Calu3 (cell line): ENCODE measurements at regions of chr11 and their contacts with region 1.

Region 1: DNA sequence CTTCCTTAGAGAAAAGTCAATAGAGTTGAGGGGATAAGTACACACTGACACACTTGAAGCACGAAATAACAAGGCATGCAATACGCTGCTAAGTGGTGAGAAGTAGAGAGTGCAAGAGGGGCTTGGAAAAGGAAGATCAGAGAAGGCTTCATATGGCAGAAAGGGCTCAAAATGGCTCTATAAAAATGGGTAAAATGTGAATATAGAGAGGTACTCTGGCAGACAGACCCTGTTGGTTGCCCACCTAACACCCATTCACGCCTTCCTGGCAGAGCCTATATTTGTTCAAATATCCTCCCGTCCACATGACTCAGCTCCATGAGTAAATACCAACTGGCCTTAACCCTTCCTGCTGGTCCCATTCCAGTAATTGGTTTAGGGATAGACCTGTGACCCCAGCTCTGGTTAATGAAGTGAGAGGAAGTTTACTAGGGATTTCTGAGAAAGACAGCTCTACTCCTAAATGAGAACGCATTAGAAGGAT is 38.9 kb upstream of the CCDC34 start:
- DNase-seq: no peak
- H3K4me3 Mint-ChIP-seq: peak overlapping the region; percentile 59
- H3K27ac Mint-ChIP-seq: peak overlapping the region; percentile 93
- H3K4me1 Mint-ChIP-seq: peaks cover 42% of the 10 kb centered on the region
- H3K27me3 Mint-ChIP-seq: no peaks in the 10 kb centered on the region
- CTCF ChIP-seq: no peak

Region 2: DNA sequence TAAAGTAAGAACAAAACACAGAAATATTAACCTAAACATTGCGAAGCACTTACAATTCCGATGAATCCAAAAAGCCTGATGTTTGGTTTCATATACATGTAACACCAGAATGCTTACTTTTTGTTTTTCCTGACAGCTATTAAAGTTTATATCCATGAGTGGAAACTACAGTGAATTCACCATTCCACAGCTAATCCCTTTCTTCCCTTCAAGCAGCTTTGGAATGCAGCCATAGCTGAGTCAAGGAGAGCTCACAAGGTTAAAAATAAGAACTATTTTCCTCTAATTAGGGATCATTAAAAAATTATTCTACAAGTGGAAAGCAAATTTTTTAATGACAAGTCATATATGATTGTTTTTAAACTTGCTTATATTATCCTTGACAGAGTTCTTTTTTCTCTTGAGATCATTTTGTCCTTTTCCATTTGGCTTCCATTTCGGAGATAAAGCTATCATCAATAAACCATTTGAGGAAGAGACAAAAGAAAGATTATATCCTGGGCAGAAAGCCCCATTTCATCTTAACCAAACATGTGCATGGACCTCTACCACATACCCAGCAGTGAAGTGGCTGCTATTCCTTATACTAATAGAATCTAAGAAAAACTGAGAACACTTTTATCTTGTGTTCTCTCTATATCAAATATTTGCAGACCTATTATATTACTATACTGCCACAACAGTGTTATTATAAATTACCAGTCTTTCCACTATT is 427.6 kb before region 1 on chr11:
- CTCF ChIA-PET with region 1: no interaction called
- intact Hi-C with region 1: no loop called
- DNase-seq: no peak
- H3K4me3 Mint-ChIP-seq: no peak overlapping the region
- H3K27ac Mint-ChIP-seq: no peak overlapping the region
- H3K4me1 Mint-ChIP-seq: no peaks in the 10 kb centered on the region
- H3K27me3 Mint-ChIP-seq: no peaks in the 10 kb centered on the region
- CTCF ChIP-seq: no peak

Region 3: GRCh38 chr11:27464154-27464759 is 62.4 kb after region 1 on chr11:
- CTCF ChIA-PET with region 1: no interaction called
- intact Hi-C with region 1: loop called (anchors 2 kb)
- DNase-seq: peak; percentile 36
- H3K4me3 Mint-ChIP-seq: peak overlapping the region; percentile 32
- H3K27ac Mint-ChIP-seq: peak overlapping the region; percentile 77
- H3K4me1 Mint-ChIP-seq: peaks cover 39% of the 10 kb centered on the region
- H3K27me3 Mint-ChIP-seq: no peaks in the 10 kb centered on the region
- CTCF ChIP-seq: no peak

Region 4: GRCh38 chr11:27599217-27599616 is 197.3 kb after region 1 on chr11:
- CTCF ChIA-PET with region 1: no interaction called
- intact Hi-C with region 1: no loop called
- DNase-seq: no peak
- H3K4me3 Mint-ChIP-seq: no peak overlapping the region
- H3K27ac Mint-ChIP-seq: no peak overlapping the region
- H3K4me1 Mint-ChIP-seq: no peaks in the 10 kb centered on the region
- H3K27me3 Mint-ChIP-seq: no peaks in the 10 kb centered on the region
- CTCF ChIP-seq: no peak